ENCODE measurements at regions of chr2 and their contacts with region 1.

Region 1: DNA sequence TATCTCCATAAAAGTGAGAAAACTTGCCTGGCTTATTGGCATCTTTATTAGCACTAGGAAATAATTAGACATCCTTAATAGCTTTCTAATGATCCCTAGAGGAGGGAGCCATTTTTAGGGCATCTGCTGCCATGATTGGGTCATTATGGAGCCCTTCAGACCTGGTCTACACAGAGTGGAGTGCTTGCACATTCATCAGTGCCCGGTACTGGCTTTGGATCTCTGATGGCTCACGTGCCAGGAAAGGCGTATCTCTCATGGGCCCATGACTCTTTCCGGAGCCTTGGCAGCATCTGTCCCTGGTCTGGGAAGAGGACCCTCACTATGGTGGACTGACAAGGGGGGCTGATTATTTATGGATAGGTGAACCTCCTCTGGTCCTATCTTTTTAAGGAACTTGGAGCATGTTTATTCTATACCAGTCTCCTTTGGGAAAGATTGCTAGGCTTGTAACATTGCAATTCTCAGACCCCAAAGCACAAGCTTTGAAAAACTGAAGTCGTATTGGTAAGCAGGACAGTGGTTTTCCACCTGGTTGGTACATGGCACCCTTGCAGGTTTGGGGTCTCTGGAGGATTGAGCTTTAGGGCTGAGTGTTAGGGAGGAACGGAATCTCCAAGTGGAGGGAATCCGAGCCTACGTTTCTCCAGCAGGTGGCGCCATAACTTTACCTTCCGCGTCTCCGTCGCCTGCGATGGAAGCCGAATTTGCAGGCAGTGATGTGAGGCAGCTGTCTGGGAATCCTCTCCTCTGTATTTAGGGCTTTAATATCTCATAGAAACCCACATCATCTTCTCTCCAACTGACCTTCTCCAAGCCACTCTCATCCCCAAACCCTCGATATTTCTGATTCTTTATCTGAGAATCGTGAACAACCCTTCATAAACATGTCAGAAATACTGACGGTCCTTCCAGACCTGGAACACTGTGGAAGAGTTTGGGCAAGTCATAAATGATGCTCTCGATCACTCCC is 27.8 kb downstream of the SIX2 start:
- DNase-seq: peak; percentile 74

Region 2: GRCh38 chr2:45119855-45120254 is 138.4 kb after region 1 on chr2:
- in situ Hi-C with region 1: no loop called
- DNase-seq: peak; percentile 26

Region 3: DNA sequence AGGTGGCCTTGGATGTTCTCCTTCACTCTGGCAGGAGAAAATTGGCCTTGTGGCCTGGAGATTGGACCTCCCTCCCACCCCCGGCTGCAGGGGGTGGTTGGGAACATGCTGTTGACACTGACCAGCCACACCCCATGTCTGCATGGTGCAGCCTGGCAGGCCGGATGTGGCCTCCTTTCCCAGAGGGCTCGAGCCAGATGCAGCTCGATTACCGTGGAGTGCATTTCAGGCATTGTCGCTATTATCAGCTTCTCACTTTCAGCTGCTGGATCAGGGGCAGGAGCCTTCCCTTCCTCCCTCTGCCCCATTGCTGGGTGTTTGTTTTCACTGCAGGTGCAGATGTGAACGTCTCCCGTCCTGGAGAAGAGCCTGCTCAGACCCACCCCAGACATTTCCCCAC is 238.8 kb after region 1 on chr2:
- in situ Hi-C with region 1: no loop called
- DNase-seq: no peak

Region 4: DNA sequence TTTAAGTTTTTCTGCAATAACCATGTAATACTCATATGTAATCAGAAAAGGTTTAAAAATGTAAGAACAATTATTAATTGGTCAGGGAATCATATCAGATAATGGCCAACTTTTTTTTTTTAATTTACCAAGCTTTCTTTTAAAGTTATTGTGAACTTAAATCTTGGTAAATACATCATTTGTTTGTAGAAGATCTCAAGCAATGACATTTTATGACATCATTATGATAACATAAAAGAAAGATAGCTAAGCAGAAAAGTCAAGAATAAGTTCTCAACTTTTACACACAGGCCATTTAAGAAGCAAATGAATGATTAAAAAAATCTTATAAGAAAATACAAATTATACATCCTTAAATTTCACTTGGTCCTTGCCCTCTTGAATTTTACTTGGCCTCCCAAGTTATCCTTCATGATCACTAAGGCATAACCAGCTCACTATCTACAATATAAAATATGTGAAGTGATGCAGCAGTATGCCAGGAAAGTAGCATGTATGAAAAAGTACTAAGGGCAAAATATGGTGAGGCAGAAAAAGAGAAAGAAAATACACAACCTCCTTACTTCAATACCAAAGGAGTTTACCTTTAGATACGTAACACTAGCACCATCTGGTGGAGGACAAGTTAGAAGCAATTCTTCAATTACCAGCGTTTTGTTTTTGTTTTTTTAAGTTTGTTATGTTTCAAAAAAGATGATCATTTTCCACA is 513.0 kb after region 1 on chr2:
- in situ Hi-C with region 1: loop called (anchors 25 kb)
- DNase-seq: peak; percentile 74